Naive thymus-derived CD4-positive, alpha-beta T cell (primary cell): ENCODE measurements at regions of chr14 and their contacts with region 1.

Region 1: GRCh38 chr14:21215130-21215878 is 53.9 kb downstream of the HNRNPC start:
- DNase-seq: no peak
- ATAC-seq: no peak
- H3K4me3 ChIP-seq: no peak overlapping the region
- H3K4me3 Mint-ChIP-seq: peak overlapping the region in 9 of 10 donors; percentile 31 to 72 (median 56)
- H3K27ac ChIP-seq: peak overlapping the region; percentile 46
- H3K27ac Mint-ChIP-seq: peak overlapping the region; percentile 52 to 94 (median 81)
- H3K4me1 ChIP-seq: peaks cover 38 to 46% of the 10 kb centered on the region in 2 donors
- H3K4me1 Mint-ChIP-seq: peaks cover 36 to 86% (median 67%) of the 10 kb centered on the region in 7 donors
- H3K27me3 ChIP-seq: no peaks in the 10 kb centered on the region
- H3K27me3 Mint-ChIP-seq: no peaks in the 10 kb centered on the region

Region 2: GRCh38 chr14:21203470-21204166 is 11.7 kb before region 1 on chr14:
- CTCF ChIA-PET with region 1: no interaction called
- POLR2A ChIA-PET with region 1: interaction called, 5 read pairs
- intact Hi-C with region 1: loop called in 1 of 2 experiments (anchors 1 kb)
- DNase-seq: no peak
- ATAC-seq: no peak
- H3K4me3 ChIP-seq: no peak overlapping the region
- H3K4me3 Mint-ChIP-seq: no peak overlapping the region
- H3K27ac ChIP-seq: no peak overlapping the region
- H3K27ac Mint-ChIP-seq: peak overlapping the region in 8 of 9 donors; percentile 2 to 76 (median 31)
- H3K4me1 ChIP-seq: no peaks in the 10 kb centered on the region
- H3K4me1 Mint-ChIP-seq: peaks cover 7 to 50% (median 23%) of the 10 kb centered on the region in 7 donors
- H3K27me3 ChIP-seq: no peaks in the 10 kb centered on the region
- H3K27me3 Mint-ChIP-seq: no peaks in the 10 kb centered on the region

Region 3: DNA sequence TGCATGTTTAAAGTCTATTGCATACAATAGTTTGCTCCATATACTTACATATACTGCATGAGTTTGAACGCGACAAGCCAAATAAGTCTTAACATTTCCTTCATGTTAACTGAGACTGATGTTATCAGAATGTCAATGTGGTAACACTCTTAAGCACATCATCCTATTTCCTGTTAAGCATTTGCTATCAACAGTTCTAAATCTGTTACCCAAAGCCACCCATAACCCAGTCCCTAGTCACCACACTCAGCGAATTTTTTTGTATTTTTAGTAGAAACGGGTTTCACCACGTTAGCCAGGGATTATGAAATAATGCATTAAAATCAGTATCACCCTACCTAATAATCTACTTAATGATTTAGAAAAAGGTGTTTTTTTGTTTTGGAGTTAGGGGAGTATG is 14.5 kb after region 1 on chr14:
- CTCF ChIA-PET with region 1: interaction called, 6 read pairs
- POLR2A ChIA-PET with region 1: interaction called, 4 read pairs
- intact Hi-C with region 1: loop called in 1 of 2 experiments (anchors 2 kb)
- DNase-seq: peak in 7 of 9 donors; percentile 52 to 76 (median 65)
- ATAC-seq: peak; percentile 93
- H3K4me3 ChIP-seq: no peak overlapping the region
- H3K4me3 Mint-ChIP-seq: peak overlapping the region; percentile 27 to 76 (median 66)
- H3K27ac ChIP-seq: peak overlapping the region; percentile 68
- H3K27ac Mint-ChIP-seq: peak overlapping the region; percentile 82 to 94 (median 89)
- H3K4me1 ChIP-seq: peaks cover 48 to 73% of the 10 kb centered on the region in 2 donors
- H3K4me1 Mint-ChIP-seq: peaks cover 44 to 84% (median 74%) of the 10 kb centered on the region in 7 donors
- H3K27me3 ChIP-seq: no peaks in the 10 kb centered on the region
- H3K27me3 Mint-ChIP-seq: no peaks in the 10 kb centered on the region

Region 4: GRCh38 chr14:21395444-21395843 is 180.1 kb after region 1 on chr14:
- CTCF ChIA-PET with region 1: no interaction called
- POLR2A ChIA-PET with region 1: no interaction called
- intact Hi-C with region 1: no loop called
- DNase-seq: no peak
- ATAC-seq: no peak
- H3K4me3 ChIP-seq: no peak overlapping the region
- H3K4me3 Mint-ChIP-seq: no peak overlapping the region
- H3K27ac ChIP-seq: no peak overlapping the region
- H3K27ac Mint-ChIP-seq: peak overlapping the region in 1 of 9 donors; percentile 39
- H3K4me1 ChIP-seq: no peaks in the 10 kb centered on the region
- H3K4me1 Mint-ChIP-seq: no peaks in the 10 kb centered on the region
- H3K27me3 ChIP-seq: no peaks in the 10 kb centered on the region
- H3K27me3 Mint-ChIP-seq: no peaks in the 10 kb centered on the region